Prostate gland (tissue), 2 donors: ENCODE measurements at regions of chr10 and their contacts with region 1.

Region 1: DNA sequence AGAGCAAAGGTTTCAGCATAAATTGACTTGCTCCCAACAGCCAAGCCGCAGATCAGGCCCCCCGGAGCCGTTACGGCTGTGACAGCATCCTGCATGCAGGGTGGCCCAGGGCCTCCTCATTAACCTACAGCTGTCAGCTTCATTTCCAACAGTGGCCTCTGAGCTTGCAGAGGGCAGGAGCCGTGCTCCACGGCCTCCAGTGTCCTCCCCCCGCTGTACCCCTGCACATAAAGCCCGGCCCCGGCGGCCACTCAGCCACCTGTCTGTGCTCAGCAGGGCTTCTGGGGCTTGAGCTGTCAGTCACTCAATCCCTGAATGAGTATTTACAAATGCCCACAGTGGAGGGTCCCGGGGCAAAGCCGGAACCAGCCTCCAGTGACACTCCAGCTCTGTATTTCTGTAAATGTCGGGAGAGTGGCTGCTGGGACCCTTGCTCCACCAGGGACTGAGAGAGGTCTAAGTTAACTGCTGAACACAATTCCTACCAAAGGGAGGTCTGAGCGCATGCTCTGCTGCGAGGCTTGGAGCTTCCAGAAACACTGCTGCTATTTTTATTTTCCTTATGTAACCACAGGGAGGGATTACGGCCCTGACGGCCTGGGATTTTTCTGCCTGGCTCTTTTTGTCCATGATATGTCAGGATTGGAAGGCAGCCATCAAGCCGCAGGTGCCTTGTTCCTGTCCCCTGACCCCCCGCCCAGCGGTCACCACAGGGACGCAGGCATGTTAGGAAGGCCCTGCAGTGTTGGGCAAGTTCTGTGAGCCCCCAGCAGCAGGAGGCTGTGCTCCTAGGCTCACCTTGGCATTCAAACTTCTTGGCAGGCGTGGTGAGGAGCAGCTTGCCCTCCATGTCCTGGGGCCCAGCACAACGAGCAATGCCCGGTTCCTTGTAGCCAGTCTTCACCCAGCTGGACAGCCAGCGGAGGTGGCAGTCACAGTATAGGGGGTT is 165.0 kb downstream of the SLIT1 start:
- DNase-seq: no peak
- H3K4me3 ChIP-seq: no peak overlapping the region
- H3K27ac ChIP-seq: peak overlapping the region in 1 of 2 donors; percentile 30
- H3K4me1 ChIP-seq: no peaks in the 10 kb centered on the region
- H3K27me3 ChIP-seq: no peaks in the 10 kb centered on the region
- CTCF ChIP-seq: no peak
- POLR2A ChIP-seq: no peak

Region 2: DNA sequence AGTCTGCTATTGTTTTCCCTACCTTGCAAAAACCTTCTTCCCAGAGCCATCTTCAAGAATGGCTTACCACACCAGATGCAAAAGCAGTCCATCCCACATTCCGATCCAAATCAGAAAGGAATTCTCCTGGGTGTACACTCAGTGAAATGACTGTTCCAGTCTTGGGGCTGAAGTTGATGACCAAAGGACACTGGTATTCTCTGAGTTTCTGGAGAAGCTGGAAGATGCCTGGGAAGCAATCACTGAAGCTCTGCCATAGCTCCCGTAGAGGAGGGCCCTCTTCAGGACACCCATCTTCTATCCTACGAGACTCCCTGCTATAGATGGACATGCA is 32.9 kb before region 1 on chr10:
- intact Hi-C with region 1: loop called (anchors 2 kb)
- DNase-seq: no peak
- H3K4me3 ChIP-seq: no peak overlapping the region
- H3K27ac ChIP-seq: no peak overlapping the region
- H3K4me1 ChIP-seq: no peaks in the 10 kb centered on the region
- H3K27me3 ChIP-seq: no peaks in the 10 kb centered on the region
- CTCF ChIP-seq: no peak
- POLR2A ChIP-seq: no peak